ENCODE measurements at regions of chr16 and their contacts with region 1.

Region 1: GRCh38 chr16:12303653-12304052 is 327.1 kb downstream of the SNX29 start:
- DNase-seq: no peak
- CTCF ChIP-seq: no peak

Region 2: DNA sequence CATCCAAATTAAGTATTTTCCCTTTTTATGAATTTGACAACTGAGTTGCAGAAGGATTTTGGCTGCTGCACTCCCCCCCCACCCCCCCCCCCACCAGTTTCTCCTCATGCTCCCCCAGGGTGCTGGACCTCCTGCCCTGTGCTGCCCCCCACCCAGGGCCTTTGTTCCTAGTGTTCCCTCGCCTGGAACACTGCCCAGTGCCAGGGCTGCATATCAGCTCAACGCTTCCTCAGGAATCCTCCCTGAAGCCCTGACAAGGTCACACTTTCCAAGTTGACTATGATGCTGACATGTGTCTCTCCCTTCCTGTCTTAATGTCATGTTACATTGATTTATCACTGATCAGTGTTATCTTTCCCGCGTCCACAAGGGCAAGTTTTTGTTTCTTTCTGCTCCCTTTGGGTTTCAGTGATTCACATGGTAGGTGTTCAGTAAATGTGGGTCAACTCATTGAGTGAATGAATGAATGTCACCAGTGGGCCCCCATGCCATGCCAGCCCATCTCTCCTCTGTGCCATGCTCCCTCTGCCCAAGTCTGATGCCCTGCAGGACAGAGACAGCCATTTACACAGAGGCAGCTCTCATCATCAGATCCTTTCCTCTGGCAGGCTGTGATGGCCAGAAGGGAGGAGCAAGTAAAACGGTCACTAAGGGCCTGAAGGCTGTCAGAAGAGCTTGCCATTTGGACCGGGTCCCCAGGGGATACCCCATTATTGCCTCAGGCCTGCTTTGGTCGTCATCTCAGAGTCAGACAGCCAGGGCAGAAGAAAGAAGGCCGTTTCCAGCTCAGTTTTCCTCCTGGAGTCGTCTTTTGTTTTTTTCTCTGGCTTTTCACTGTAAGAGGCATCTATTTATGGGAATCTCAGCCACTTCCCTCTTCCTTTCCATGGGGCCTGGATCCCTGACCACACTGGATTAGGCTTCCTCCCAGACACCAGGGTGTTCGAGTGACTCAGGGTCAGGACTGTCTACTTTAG is 59.1 kb after region 1 on chr16:
- in situ Hi-C with region 1: loop called (anchors 10 kb)
- DNase-seq: no peak
- CTCF ChIP-seq: no peak